Head of caudate nucleus (tissue), 42 donors: ENCODE measurements at regions of chr9 and their contacts with region 1.

Region 1: GRCh38 chr9:130997925-130998596 is 10.9 kb upstream of the LAMC3 start:
- DNase-seq: peak; percentile 33 to 93 (median 82)

Region 2: GRCh38 chr9:130707225-130707976 is 290.7 kb before region 1 on chr9:
- intact Hi-C with region 1: loop called (anchors 5 kb)
- DNase-seq: peak in 39 of 42 donors; percentile 27 to 90 (median 66)

Region 3: GRCh38 chr9:130824643-130825350 is 173.3 kb before region 1 on chr9:
- intact Hi-C with region 1: no loop called
- DNase-seq: peak in 2 of 42 donors; percentile 35 to 49

Region 4: DNA sequence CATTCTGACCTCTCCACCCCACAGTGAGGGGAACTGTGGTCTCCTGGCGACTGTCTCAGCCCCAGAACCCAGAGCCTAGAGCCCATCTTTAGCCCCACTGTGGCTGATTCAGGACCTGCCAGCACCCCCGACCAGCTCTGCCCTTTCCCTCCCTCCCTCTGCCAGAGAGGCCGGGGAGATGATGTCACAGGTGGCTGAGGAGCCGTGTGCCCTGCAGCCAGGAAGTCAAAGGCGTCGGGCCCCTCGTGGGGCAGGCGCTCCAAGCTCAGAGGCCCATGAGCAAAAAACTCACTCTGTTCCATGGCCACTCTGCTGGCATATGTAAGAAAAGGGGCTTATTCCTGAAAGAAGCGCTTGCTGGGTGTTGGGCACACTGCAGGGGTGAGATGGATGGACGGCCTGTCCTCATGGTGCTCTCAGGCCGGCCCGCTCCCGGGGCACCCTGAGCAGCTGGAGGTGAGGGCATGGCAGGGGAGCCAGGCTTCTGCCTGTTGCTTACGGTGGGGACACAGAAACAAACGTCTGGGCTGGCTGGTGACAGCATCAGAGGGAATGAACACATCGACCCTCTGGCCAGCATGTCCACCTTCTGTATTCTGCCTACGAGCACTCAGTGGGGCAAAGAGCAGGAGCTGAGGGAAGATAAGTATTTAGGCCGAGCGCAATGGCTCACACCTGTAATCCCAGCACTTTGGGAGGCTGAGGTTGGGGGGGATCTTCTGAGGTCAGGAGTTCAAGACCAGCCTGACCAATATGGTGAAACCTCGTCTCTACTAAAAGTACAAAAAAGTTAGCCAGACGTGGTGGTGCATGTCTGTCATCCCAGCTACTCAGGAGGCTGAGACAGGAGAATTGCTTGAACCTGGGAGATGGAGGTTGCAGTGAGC is 52.0 kb after region 1 on chr9:
- intact Hi-C with region 1: no loop called
- DNase-seq: no peak

Region 5: DNA sequence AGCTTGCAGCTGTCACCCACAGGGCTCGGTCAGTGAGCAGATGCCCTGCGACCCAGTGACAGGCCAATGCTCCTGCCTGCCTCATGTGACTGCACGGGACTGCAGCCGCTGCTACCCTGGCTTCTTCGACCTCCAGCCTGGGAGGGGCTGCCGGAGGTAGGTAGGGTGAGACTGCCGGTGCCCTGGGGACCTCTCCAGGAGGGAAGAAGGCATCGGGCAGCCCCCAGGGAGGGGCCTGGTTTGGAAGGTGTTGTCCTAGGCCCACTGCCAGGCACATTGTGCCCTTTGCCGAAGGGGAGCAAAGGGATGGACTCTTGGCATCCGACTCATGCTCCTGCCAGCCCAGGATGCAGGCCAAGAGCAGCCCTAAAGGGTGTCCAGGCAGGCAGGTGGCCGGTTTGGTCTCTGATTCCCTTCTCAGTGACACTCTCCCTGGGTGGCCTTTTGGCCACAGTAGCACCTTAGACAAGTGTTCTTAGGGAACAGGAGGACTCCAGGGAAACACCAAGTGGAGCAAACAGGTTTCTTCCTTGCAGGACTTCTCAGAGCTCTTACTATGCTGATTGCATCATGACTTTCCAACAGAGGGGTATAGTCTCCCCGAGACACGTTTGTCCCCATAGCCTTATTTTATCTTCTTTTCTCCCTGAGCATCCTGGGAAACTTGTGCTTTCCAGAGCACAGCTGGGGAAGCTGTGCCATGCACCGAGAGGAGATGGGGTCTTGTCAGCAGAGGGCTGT is 70.2 kb after region 1 on chr9:
- intact Hi-C with region 1: no loop called
- DNase-seq: no peak